Naive thymus-derived CD4-positive, alpha-beta T cell (primary cell): ENCODE measurements at regions of chr11 and their contacts with region 1.

Region 1: GRCh38 chr11:13955971-13956421 is 6.5 kb upstream of the SPON1 start:
- DNase-seq: peak in 8 of 9 donors; percentile 39 to 75 (median 56)
- ATAC-seq: peak; percentile 91
- H3K4me3 ChIP-seq: no peak overlapping the region
- H3K4me3 Mint-ChIP-seq: no peak overlapping the region
- H3K27ac ChIP-seq: no peak overlapping the region
- H3K27ac Mint-ChIP-seq: no peak overlapping the region
- H3K4me1 ChIP-seq: no peaks in the 10 kb centered on the region
- H3K4me1 Mint-ChIP-seq: peaks cover 0 to 2% (median 0%) of the 10 kb centered on the region in 7 donors
- H3K27me3 ChIP-seq: no peaks in the 10 kb centered on the region
- H3K27me3 Mint-ChIP-seq: peaks cover 18 to 55% (median 22%) of the 10 kb centered on the region in 5 donors

Region 2: GRCh38 chr11:12523180-12523924 is 1432.6 kb before region 1 on chr11:
- CTCF ChIA-PET with region 1: no interaction called
- POLR2A ChIA-PET with region 1: no interaction called
- intact Hi-C with region 1: no loop called
- DNase-seq: no peak
- ATAC-seq: no peak
- H3K4me3 ChIP-seq: no peak overlapping the region
- H3K4me3 Mint-ChIP-seq: no peak overlapping the region
- H3K27ac ChIP-seq: no peak overlapping the region
- H3K27ac Mint-ChIP-seq: no peak overlapping the region
- H3K4me1 ChIP-seq: no peaks in the 10 kb centered on the region
- H3K4me1 Mint-ChIP-seq: peaks cover 0 to 6% (median 0%) of the 10 kb centered on the region in 7 donors
- H3K27me3 ChIP-seq: no peaks in the 10 kb centered on the region
- H3K27me3 Mint-ChIP-seq: peaks cover 0 to 17% (median 2%) of the 10 kb centered on the region in 5 donors

Region 3: DNA sequence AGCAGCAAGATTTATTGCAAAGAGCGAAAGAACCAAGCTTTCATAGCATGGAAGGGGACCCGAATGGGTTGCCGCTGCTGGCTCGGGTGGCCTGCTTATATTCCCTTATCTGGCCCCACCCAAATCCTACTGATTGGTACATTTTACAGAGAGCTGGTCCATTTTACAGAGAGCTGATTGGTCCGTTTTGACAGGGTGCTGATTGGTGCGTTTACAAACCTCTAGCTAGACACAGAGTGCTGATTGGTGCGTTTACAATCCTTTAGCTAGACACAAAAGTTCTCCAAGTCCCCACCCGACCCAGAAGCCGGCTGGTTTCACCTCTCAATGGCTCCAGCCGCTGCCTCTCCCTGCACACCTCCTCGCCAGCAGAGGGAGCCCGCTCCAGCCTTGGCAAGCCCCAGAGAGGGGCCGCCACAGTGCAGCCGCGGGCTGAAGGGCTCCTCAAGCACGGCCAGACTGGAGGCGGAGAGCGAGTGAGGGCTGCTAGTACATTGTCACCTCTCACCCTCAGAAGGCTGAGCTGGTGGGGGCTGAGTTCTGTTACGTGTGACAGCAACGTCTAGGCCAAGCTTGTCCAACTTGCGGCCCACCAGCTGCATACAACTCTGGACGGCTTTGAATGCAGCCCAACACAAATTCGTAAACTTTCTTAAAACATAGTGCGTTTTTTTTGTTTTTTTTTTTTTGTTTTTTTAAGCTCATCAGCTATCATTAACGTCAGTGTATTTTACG is 468.9 kb before region 1 on chr11:
- CTCF ChIA-PET with region 1: no interaction called
- POLR2A ChIA-PET with region 1: no interaction called
- intact Hi-C with region 1: loop called in 1 of 2 experiments (anchors 5 kb)
- DNase-seq: peak; percentile 28 to 64 (median 55)
- ATAC-seq: peak; percentile 92
- H3K4me3 ChIP-seq: peak overlapping the region; percentile 61
- H3K4me3 Mint-ChIP-seq: peak overlapping the region; percentile 66 to 90 (median 76)
- H3K27ac ChIP-seq: no peak overlapping the region
- H3K27ac Mint-ChIP-seq: peak overlapping the region in 6 of 9 donors; percentile 40 to 77 (median 74)
- H3K4me1 ChIP-seq: peaks cover 0 to 4% of the 10 kb centered on the region in 2 donors
- H3K4me1 Mint-ChIP-seq: peaks cover 5 to 7% (median 6%) of the 10 kb centered on the region in 7 donors
- H3K27me3 ChIP-seq: no peaks in the 10 kb centered on the region
- H3K27me3 Mint-ChIP-seq: peaks cover 2 to 12% (median 4%) of the 10 kb centered on the region in 5 donors

Region 4: DNA sequence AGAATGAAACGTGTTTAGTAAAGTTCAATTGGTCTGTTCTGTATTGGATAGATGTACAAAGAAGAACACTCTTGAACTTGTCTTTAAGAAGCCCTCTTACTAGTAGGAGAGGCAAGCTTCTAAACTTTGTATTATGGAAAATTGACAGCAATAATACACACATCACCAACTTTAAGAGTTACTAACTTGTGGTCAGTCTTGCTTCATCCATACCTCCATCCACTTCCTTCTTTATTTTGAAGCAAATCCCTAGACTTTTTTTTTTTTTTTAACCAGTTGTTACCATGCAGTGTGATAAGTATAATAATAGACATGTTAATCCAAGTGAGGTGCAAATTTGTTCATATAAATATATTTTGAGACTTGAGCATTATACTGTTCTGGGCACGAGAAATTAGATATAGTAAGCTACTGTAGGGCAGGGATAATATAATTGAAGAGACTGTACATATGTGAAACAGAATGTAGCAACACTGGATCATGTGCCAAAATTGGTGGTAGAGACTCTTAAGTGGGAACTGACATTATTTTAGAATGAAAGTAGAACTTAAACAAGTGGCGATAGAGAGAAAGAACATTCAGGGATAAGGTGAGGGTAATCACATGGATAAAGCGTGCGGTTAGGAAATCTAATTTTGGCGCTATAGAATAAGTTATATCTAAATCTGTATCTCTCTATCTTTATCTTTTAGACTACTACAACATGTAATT is 281.0 kb before region 1 on chr11:
- CTCF ChIA-PET with region 1: no interaction called
- POLR2A ChIA-PET with region 1: no interaction called
- intact Hi-C with region 1: no loop called
- DNase-seq: no peak
- ATAC-seq: peak; percentile 59
- H3K4me3 ChIP-seq: no peak overlapping the region
- H3K4me3 Mint-ChIP-seq: no peak overlapping the region
- H3K27ac ChIP-seq: no peak overlapping the region
- H3K27ac Mint-ChIP-seq: no peak overlapping the region
- H3K4me1 ChIP-seq: peaks cover 0 to 6% of the 10 kb centered on the region in 2 donors
- H3K4me1 Mint-ChIP-seq: peaks cover 42 to 79% (median 72%) of the 10 kb centered on the region in 7 donors
- H3K27me3 ChIP-seq: no peaks in the 10 kb centered on the region
- H3K27me3 Mint-ChIP-seq: no peaks in the 10 kb centered on the region

Region 5: GRCh38 chr11:13861411-13861810 is 94.6 kb before region 1 on chr11:
- CTCF ChIA-PET with region 1: interaction called, 29 read pairs
- POLR2A ChIA-PET with region 1: interaction called, 4 read pairs
- intact Hi-C with region 1: loop called in 1 of 2 experiments (anchors 1 kb)
- DNase-seq: peak in 4 of 9 donors; percentile 11 to 19 (median 14)
- ATAC-seq: no peak
- H3K4me3 ChIP-seq: no peak overlapping the region
- H3K4me3 Mint-ChIP-seq: peak overlapping the region in 7 of 10 donors; percentile 6 to 66 (median 55)
- H3K27ac ChIP-seq: no peak overlapping the region
- H3K27ac Mint-ChIP-seq: peak overlapping the region in 8 of 9 donors; percentile 33 to 98 (median 71)
- H3K4me1 ChIP-seq: peaks cover 6 to 19% of the 10 kb centered on the region in 2 donors
- H3K4me1 Mint-ChIP-seq: peaks cover 20 to 33% (median 25%) of the 10 kb centered on the region in 7 donors
- H3K27me3 ChIP-seq: no peaks in the 10 kb centered on the region
- H3K27me3 Mint-ChIP-seq: no peaks in the 10 kb centered on the region

Region 6: DNA sequence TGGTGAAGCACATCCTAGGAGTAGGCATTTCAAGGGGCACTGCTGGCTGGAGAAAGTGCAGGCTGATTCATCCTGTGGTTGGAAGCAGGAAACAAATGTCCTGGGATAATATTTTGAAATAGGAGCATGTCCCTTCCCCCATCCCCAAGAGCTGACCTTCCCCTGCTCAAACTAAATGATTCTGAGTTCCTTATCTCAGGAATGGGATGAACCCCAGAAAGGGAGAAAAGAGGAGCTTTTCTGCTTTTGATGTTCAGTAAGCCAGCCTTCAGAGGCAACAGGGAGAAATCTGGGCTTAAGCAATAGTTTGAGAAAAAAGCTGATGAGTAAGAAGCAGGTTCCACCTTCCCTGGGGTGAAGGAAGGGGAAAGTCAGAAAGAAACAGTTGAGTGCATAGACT is 13.0 kb before region 1 on chr11:
- CTCF ChIA-PET with region 1: interaction called, 19 read pairs
- POLR2A ChIA-PET with region 1: interaction called, 9 read pairs
- intact Hi-C with region 1: loop called in 1 of 2 experiments (anchors 2 kb)
- DNase-seq: no peak
- ATAC-seq: no peak
- H3K4me3 ChIP-seq: no peak overlapping the region
- H3K4me3 Mint-ChIP-seq: peak overlapping the region in 1 of 10 donors; percentile 36
- H3K27ac ChIP-seq: no peak overlapping the region
- H3K27ac Mint-ChIP-seq: peak overlapping the region in 4 of 9 donors; percentile 0 to 54 (median 8)
- H3K4me1 ChIP-seq: peaks cover 28 to 50% of the 10 kb centered on the region in 2 donors
- H3K4me1 Mint-ChIP-seq: peaks cover 20 to 67% (median 54%) of the 10 kb centered on the region in 7 donors
- H3K27me3 ChIP-seq: no peaks in the 10 kb centered on the region
- H3K27me3 Mint-ChIP-seq: peaks cover 0 to 18% (median 0%) of the 10 kb centered on the region in 5 donors

Region 7: DNA sequence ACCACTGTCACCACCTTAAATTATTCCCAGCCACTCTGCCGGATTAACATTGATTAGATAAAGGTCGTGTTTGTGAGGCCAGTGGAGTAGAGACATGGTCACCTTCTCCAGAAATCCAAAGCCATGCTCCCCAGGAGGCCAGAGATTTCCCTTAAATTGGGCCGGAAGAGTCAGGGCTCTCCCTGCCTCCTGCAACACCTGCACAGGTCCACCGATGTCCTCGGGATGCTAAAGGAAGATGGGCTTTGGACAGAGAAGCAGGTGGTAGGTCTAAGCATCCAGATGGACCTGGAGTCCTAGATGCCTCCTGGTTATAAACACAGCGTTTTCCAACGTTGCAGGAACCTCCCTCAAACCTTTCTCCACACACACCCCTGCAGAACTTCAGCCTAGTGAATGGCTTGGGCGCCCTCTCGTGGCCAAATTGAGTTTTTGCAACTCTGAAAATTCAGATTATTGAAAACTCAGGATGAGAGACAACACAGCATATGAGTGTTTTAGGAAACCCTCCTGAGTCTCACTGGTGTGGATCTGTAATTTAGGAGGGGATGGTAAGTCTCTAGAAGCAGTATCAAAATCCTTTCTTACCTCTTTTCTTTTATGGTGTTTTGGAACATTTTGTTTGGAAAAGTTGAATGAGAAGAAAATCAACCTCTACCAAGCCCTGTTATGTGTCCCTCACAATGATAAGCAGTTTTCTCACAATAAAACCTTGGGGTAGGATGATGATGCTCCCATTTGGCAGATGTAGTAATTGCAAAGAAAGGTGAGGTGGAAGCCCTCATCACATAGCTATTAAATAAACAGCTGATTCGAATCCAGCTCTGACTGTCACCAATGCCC is 293.3 kb after region 1 on chr11:
- CTCF ChIA-PET with region 1: interaction called, 12 read pairs
- POLR2A ChIA-PET with region 1: interaction called, 7 read pairs
- intact Hi-C with region 1: loop called (anchors 1 kb)
- DNase-seq: peak; percentile 42 to 77 (median 62)
- ATAC-seq: peak; percentile 75
- H3K4me3 ChIP-seq: peak overlapping the region; percentile 31
- H3K4me3 Mint-ChIP-seq: peak overlapping the region; percentile 46 to 77 (median 72)
- H3K27ac ChIP-seq: no peak overlapping the region
- H3K27ac Mint-ChIP-seq: peak overlapping the region in 2 of 9 donors; percentile 71 to 80
- H3K4me1 ChIP-seq: peaks cover 12 to 13% of the 10 kb centered on the region in 2 donors
- H3K4me1 Mint-ChIP-seq: peaks cover 13 to 28% (median 24%) of the 10 kb centered on the region in 7 donors
- H3K27me3 ChIP-seq: no peaks in the 10 kb centered on the region
- H3K27me3 Mint-ChIP-seq: peaks cover 0 to 22% (median 0%) of the 10 kb centered on the region in 5 donors

Region 8: GRCh38 chr11:14566331-14567063 is 610.5 kb after region 1 on chr11:
- CTCF ChIA-PET with region 1: no interaction called
- POLR2A ChIA-PET with region 1: no interaction called
- intact Hi-C with region 1: no loop called
- DNase-seq: no peak
- ATAC-seq: no peak
- H3K4me3 ChIP-seq: no peak overlapping the region
- H3K4me3 Mint-ChIP-seq: peak overlapping the region in 3 of 10 donors; percentile 26 to 35 (median 29)
- H3K27ac ChIP-seq: no peak overlapping the region
- H3K27ac Mint-ChIP-seq: peak overlapping the region in 8 of 9 donors; percentile 30 to 77 (median 66)
- H3K4me1 ChIP-seq: peaks cover 15 to 28% of the 10 kb centered on the region in 2 donors
- H3K4me1 Mint-ChIP-seq: peaks cover 37 to 83% (median 71%) of the 10 kb centered on the region in 7 donors
- H3K27me3 ChIP-seq: no peaks in the 10 kb centered on the region
- H3K27me3 Mint-ChIP-seq: no peaks in the 10 kb centered on the region